Sciatic nerve (tissue), 2 donors: ENCODE measurements at regions of chr11 and their contacts with region 1.

Region 1: DNA sequence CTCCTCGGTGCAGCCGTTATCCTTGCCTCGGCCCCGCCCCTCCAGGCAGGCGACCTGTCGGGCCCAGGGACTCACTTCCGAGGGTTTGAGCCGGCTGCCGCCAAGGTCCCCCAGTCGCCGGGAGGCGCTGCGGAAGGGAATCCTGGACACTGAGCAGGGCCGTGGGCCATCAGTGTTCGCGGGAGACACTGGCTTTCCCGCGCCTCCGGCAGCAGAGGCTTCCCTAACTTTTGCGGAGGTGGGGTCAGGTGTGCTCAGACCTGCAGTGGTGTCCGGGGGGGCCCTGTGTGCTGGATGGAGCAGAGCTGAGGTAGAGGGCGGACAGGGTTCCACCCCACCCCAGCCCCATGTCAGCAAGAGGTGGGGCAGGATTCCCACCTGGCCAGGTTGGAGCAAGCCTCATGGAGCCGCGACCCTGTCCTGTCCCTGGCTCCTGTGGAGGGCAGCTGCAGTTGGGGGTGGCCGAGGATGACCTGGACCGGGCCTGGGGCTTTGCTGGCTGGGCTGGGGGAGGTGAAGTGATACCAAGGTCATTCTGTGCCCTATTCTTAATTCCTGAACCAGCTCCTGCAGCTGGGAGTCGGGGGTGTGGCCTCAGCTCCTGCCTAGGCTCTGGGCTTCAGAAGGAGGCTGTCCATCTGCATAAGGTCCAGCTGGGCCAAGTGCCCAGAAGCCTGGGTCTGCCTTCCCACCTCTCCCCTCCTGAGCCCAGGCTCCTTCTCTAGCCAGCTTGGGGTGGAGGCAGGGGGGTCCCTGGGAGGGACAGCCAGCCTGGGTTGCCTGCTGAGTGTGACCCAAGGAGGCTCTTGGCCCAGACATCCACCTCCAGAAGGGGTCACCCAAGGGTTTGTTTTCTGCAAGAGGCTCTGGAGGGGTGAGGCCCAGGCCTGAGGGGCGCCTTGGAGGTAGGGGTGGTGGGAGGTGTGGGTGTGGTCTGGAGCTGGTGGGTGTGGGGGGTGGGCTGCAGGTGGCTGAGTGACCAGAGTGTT is 8.4 kb downstream of the TSPAN4 start:
- DNase-seq: no peak
- ATAC-seq: peak; percentile 1

Region 2: GRCh38 chr11:898143-898511 is 47.1 kb after region 1 on chr11:
- intact Hi-C with region 1: no loop called
- DNase-seq: no peak
- ATAC-seq: peak; percentile 39

Region 3: DNA sequence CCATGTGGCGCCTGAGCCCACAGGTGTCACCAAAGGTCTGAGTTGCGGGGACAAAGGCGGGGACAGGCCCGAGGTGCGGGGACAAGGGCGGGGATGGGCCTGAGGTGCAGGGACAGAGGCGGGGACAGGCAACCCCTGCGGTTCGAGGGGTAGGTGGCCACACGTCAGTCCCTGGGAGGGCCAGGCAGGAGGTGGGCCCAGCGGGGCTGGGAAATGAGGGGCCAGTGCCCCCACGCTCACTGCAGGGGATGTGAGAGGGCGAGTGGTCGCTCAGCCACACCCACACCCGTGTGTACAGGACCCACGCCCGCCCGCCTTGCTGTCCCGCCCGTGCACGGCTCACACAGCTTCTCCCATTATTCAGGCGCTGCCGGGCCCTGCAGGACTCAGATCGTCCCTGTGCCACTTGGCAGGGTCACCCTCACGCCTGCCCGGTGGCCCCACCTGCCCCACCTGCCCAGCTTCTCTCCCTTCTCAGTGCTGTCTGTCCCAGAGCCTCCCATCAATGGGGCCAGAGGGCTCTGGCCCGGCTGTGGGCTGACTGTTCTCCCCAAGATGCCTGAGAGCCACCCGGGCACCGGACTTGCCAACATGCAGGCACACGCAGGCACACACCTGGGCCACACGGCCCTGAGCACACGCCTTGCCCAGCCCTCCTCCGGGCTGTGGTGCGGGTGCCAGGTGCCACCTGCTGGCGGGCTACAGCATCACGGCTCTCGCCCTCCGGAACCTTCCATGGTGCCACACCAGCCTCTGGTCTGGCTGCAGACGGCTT is 199.7 kb after region 1 on chr11:
- intact Hi-C with region 1: loop called (anchors 5 kb)
- DNase-seq: no peak
- ATAC-seq: peak; percentile 90